ENCODE measurements at regions of chr1 and their contacts with region 1.

Region 1: GRCh38 chr1:225642177-225642576 is 10.7 kb downstream of the ENAH start:
- ATAC-seq: no peak
- H3K4me3 ChIP-seq: no peak overlapping the region
- H3K27ac ChIP-seq: no peak overlapping the region
- H3K4me1 ChIP-seq: no peaks in the 10 kb centered on the region

Region 2: GRCh38 chr1:225480825-225481434 is 161.2 kb before region 1 on chr1:
- in situ Hi-C with region 1: loop called in 1 of 9 experiments (anchors 10 kb)
- ATAC-seq: peak in 5 of 8 experiments; percentile 13 to 51 (median 37)
- H3K4me3 ChIP-seq: no peak overlapping the region
- H3K27ac ChIP-seq: no peak overlapping the region
- H3K4me1 ChIP-seq: no peaks in the 10 kb centered on the region